Endothelial cell of umbilical vein (primary cell): ENCODE measurements at regions of chr20 and their contacts with region 1.

Region 1: GRCh38 chr20:19840111-19840710 is 82.2 kb downstream of the RIN2 start:
- DNase-seq: peak; percentile 89
- H3K4me3 ChIP-seq: no peak overlapping the region
- H3K27ac ChIP-seq: peak overlapping the region; percentile 18
- H3K4me1 ChIP-seq: peaks cover 10% of the 10 kb centered on the region
- H3K27me3 ChIP-seq: no peaks in the 10 kb centered on the region
- CTCF ChIP-seq: no peak
- POLR2A ChIP-seq: peak; percentile 24

Region 2: DNA sequence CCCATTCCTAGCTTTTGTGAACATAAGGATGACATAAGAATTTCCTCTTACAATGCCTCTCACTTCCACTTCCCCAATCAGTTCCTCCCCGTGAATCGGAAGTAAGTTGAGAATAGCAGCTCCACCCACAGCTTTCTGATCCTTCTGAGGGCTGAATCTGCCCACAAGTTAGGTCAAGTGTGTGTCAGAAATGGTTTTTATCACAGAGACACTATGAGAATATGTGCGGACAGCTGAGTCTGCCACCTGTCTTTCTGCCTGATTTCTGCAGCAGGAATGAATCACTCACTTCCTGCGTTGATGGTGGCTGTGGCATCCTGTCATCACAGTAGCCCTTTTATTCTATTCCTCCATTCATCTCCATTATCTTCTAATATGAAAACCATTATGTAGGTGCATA is 12.0 kb before region 1 on chr20:
- CTCF ChIA-PET with region 1: interaction called, 6 read pairs
- POLR2A ChIA-PET with region 1: no interaction called
- dilution Hi-C with region 1: no loop called
- intact Hi-C with region 1: loop called (anchors 1 kb)
- DNase-seq: peak; percentile 70
- H3K4me3 ChIP-seq: no peak overlapping the region
- H3K27ac ChIP-seq: peak overlapping the region; percentile 57
- H3K4me1 ChIP-seq: peaks cover 23% of the 10 kb centered on the region
- H3K27me3 ChIP-seq: no peaks in the 10 kb centered on the region
- CTCF ChIP-seq: peak; percentile 14 to 22
- POLR2A ChIP-seq: no peak